WTC11 (cell line): ENCODE measurements at regions of chr21 and their contacts with region 1.

Region 1: GRCh38 chr21:33360881-33361602 is 36.3 kb downstream of the IFNAR1 start:
- DNase-seq: peak; percentile 94
- ATAC-seq: peak; percentile 85
- H3K4me3 Mint-ChIP-seq: peak overlapping the region; percentile 37
- H3K27ac Mint-ChIP-seq: peak overlapping the region; percentile 85; the same call in 1 of the 2 replicates
- H3K4me1 Mint-ChIP-seq: peaks cover 18% of the 10 kb centered on the region
- H3K27me3 Mint-ChIP-seq: no peaks in the 10 kb centered on the region
- CTCF ChIP-seq: peak; percentile 83

Region 2: GRCh38 chr21:33199516-33200217 is 161.4 kb before region 1 on chr21:
- CTCF ChIA-PET with region 1: interaction called, 29 read pairs
- POLR2A ChIA-PET with region 1: no interaction called
- DNase-seq: peak; percentile 56
- ATAC-seq: peak; percentile 82
- H3K4me3 Mint-ChIP-seq: no peak overlapping the region
- H3K27ac Mint-ChIP-seq: no peak overlapping the region
- H3K4me1 Mint-ChIP-seq: peaks cover 16% of the 10 kb centered on the region
- H3K27me3 Mint-ChIP-seq: peaks cover 4% of the 10 kb centered on the region; the same call in 1 of the 2 replicates
- CTCF ChIP-seq: peak; percentile 34; the same call in 1 of the 2 replicates

Region 3: DNA sequence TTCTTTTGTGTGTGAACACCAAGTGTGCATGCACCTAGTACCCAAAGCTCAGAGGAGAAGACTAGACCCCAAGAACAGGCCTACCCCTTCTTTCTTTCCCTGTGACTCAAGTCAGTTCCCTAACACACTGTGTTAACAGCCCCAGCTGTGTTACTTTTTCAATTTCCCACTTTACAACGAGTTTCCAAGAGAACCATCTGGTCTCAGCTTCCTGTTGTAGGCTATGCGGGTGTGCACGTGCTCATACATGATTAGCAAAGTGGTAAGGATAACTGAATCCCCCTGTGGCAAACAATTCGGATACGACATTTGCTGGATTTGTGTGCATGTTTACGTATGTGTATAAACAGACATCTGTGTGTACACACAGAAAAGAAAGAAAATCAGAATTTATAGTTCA is 113.4 kb before region 1 on chr21:
- CTCF ChIA-PET with region 1: no interaction called
- POLR2A ChIA-PET with region 1: no interaction called
- DNase-seq: no peak
- ATAC-seq: no peak
- H3K4me3 Mint-ChIP-seq: no peak overlapping the region
- H3K27ac Mint-ChIP-seq: no peak overlapping the region
- H3K4me1 Mint-ChIP-seq: no peaks in the 10 kb centered on the region
- H3K27me3 Mint-ChIP-seq: no peaks in the 10 kb centered on the region
- CTCF ChIP-seq: no peak

Region 4: GRCh38 chr21:33266050-33266788 is 94.8 kb before region 1 on chr21 and contains the start of gene IL10RB:
- CTCF ChIA-PET with region 1: interaction called, 21 read pairs
- POLR2A ChIA-PET with region 1: interaction called, 10 read pairs
- DNase-seq: peak; percentile 71
- ATAC-seq: peak; percentile 82
- H3K4me3 Mint-ChIP-seq: peak within 1 kb of the TSS; percentile 78
- H3K27ac Mint-ChIP-seq: peak within 1 kb of the TSS; percentile 15; the same call in 1 of the 2 replicates
- H3K4me1 Mint-ChIP-seq: peaks cover 31% of the 10 kb centered on the region
- H3K27me3 Mint-ChIP-seq: no peaks in the 10 kb centered on the region; the same call in 1 of the 2 replicates
- CTCF ChIP-seq: no peak
- total RNA-seq, gene IL10RB: 3.7 to 5.1 TPM (median 4.1 TPM) in 3 replicates

Region 5: DNA sequence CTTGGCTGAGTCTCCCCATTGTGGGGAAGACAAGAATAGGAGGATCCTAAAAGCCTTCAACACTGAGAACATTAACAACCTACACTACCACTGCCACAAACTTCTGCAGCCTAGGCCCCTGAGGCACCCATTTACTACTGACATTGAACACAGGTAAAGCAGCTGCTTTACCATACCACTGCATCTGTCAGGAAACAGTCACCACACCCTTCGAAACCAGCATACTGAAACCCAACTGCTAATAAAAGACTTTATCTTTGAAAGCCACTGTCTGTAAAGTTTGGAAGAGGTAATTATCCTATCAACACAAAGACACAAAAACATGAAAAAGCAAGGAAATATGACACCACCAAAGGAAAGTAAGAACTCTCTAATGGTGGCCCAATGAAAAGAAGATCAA is 28.9 kb before region 1 on chr21:
- CTCF ChIA-PET with region 1: interaction called, 10 read pairs
- POLR2A ChIA-PET with region 1: no interaction called
- DNase-seq: no peak
- ATAC-seq: no peak
- H3K4me3 Mint-ChIP-seq: no peak overlapping the region
- H3K27ac Mint-ChIP-seq: no peak overlapping the region
- H3K4me1 Mint-ChIP-seq: no peaks in the 10 kb centered on the region
- H3K27me3 Mint-ChIP-seq: no peaks in the 10 kb centered on the region
- CTCF ChIP-seq: no peak

Region 6: GRCh38 chr21:33374450-33375096 is 13.5 kb after region 1 on chr21:
- CTCF ChIA-PET with region 1: interaction called, 11 read pairs
- POLR2A ChIA-PET with region 1: no interaction called
- DNase-seq: peak; percentile 49
- ATAC-seq: peak; percentile 77
- H3K4me3 Mint-ChIP-seq: no peak overlapping the region
- H3K27ac Mint-ChIP-seq: no peak overlapping the region
- H3K4me1 Mint-ChIP-seq: peaks cover 2% of the 10 kb centered on the region; the same call in 1 of the 2 replicates
- H3K27me3 Mint-ChIP-seq: no peaks in the 10 kb centered on the region; the same call in 1 of the 2 replicates
- CTCF ChIP-seq: no peak

Region 7: DNA sequence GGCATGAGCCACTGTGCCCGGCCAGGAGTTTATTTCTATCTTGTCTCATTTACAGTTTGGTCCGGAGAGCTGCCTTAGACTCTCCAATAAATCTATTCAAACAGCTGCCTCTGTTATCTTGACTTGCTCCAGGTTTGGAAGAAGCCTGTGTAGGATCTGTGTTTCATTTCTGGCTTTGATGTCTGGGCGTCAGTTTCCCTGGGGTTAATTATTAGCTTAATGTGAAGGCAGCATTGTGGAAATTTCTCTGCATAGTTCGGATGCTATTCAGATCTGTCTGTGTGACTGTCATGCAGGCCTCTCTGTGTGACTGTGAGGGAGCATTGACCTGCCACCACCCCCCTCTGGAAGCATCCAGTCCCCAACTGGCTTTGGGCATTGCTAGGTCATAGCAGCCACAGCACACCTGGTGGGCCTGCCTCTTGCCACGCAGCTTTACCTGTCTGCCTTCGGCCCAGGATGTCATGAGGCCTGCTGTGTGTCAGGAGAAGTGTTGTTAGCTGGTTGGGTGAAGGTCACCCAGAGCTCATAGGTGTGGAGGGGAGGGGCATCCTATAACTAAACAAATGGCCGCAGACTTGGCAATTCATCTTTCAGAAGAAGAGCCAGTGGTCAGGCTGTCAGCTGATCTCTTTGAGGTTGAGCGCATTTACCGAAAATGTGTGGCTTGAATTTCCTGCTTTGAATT is 51.9 kb after region 1 on chr21:
- CTCF ChIA-PET with region 1: interaction called, 13 read pairs
- POLR2A ChIA-PET with region 1: interaction called, 3 read pairs
- DNase-seq: no peak
- ATAC-seq: peak; percentile 62
- H3K4me3 Mint-ChIP-seq: no peak overlapping the region
- H3K27ac Mint-ChIP-seq: peak overlapping the region; percentile 86
- H3K4me1 Mint-ChIP-seq: peaks cover 16% of the 10 kb centered on the region
- H3K27me3 Mint-ChIP-seq: no peaks in the 10 kb centered on the region
- CTCF ChIP-seq: no peak